HCT116 (cell line): ENCODE measurements at regions of chr14 and their contacts with region 1.

Region 1: GRCh38 chr14:23320774-23321571 is at the start of gene PABPN1:
- DNase-seq: peak; percentile 100
- ATAC-seq: peak; percentile 91
- H3K4me3 ChIP-seq: peak within 1 kb of the TSS; percentile 64 to 98
- H3K27ac ChIP-seq: peak within 1 kb of the TSS; percentile 83
- H3K4me1 ChIP-seq: peaks cover 12 to 23% of the 10 kb centered on the region in 2 experiments; a peak in 3 of 4 replicates
- H3K27me3 ChIP-seq: no peaks in the 10 kb centered on the region
- CTCF ChIP-seq: no peak
- POLR2A ChIP-seq: no peak
- RAD21 ChIP-seq: no peak
- total RNA-seq, gene PABPN1: 184 TPM

Region 2: DNA sequence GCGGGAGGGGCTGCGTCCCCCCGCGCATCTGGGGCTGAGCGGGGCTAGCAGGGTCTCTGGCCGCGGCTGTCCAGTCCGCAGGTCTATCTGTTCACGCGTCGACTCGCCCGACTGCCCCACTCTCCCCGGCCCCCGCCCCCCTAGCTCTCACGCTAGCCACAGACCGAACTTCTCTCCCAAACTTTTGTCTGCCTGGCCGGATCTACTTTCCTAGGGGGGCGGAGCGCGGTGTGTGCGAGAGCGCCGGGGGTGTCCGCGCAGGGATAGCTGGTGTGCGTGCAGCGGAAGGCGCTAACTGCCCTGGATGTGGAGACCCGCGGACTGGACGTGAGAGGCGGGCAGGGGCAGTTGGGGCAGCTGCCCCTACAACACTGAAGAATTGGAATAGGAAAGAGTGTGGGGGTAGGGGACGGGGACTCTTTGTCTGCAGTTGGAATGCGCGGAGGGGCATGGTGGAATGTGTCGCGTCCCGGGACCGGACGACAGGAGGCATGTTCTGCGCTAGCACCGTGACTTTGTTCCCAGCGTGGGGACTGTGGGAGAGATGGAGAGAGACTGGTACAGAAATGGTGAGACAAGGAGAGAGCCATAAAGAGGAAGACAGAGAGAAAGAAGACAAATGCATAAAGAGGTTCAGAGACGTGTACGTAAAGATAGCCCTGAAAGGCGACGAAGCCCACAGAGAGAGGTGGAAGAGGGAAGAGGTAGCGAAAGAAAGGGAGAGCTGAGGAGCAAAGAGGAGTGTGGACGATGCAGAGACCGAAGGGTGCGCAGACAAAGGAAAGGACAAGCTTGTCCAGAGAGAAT is 338.3 kb before region 1 on chr14 and contains the start of gene AJUBA:
- CTCF ChIA-PET with region 1: no interaction called
- POLR2A ChIA-PET with region 1: no interaction called
- RAD21 ChIA-PET with region 1: no interaction called
- intact Hi-C with region 1: no loop called
- DNase-seq: peak; percentile 78
- ATAC-seq: peak; percentile 57
- H3K4me3 ChIP-seq: peak within 1 kb of the TSS; percentile 77 to 83
- H3K27ac ChIP-seq: peak within 1 kb of the TSS; percentile 95
- H3K4me1 ChIP-seq: peaks cover 28 to 38% of the 10 kb centered on the region in 2 experiments
- H3K27me3 ChIP-seq: no peaks in the 10 kb centered on the region
- CTCF ChIP-seq: no peak
- POLR2A ChIP-seq: no peak
- RAD21 ChIP-seq: no peak
- total RNA-seq, gene AJUBA: 39.7 TPM

Region 3: GRCh38 chr14:23286020-23286905 is 34.7 kb before region 1 on chr14 and contains the start of gene HOMEZ:
- CTCF ChIA-PET with region 1: no interaction called
- POLR2A ChIA-PET with region 1: interaction called, 6 read pairs
- RAD21 ChIA-PET with region 1: no interaction called
- intact Hi-C with region 1: loop called (anchors 1 kb)
- DNase-seq: peak; percentile 92
- ATAC-seq: peak; percentile 98
- H3K4me3 ChIP-seq: peak within 1 kb of the TSS; percentile 74 to 96
- H3K27ac ChIP-seq: peak within 1 kb of the TSS; percentile 77
- H3K4me1 ChIP-seq: peaks cover 10 to 14% of the 10 kb centered on the region in 2 experiments
- H3K27me3 ChIP-seq: no peaks in the 10 kb centered on the region
- CTCF ChIP-seq: no peak
- POLR2A ChIP-seq: peak; percentile 61
- RAD21 ChIP-seq: no peak
- total RNA-seq, gene HOMEZ: 18.2 TPM

Region 4: GRCh38 chr14:23301288-23301968 is 19.5 kb before region 1 on chr14:
- CTCF ChIA-PET with region 1: interaction called, 15 read pairs
- POLR2A ChIA-PET with region 1: interaction called, 21 read pairs
- RAD21 ChIA-PET with region 1: interaction called in 1 of 2 experiments, 8 read pairs
- intact Hi-C with region 1: no loop called
- DNase-seq: peak; percentile 95
- ATAC-seq: peak; percentile 84
- H3K4me3 ChIP-seq: peak overlapping the region; percentile 54 to 64
- H3K27ac ChIP-seq: peak overlapping the region; percentile 96
- H3K4me1 ChIP-seq: peaks cover 18 to 41% of the 10 kb centered on the region in 2 experiments
- H3K27me3 ChIP-seq: no peaks in the 10 kb centered on the region
- CTCF ChIP-seq: peak in 2 of 3 experiments; percentile 69 to 70; a peak in 4 of 6 replicates
- POLR2A ChIP-seq: peak; percentile 33
- RAD21 ChIP-seq: no peak

Region 5: DNA sequence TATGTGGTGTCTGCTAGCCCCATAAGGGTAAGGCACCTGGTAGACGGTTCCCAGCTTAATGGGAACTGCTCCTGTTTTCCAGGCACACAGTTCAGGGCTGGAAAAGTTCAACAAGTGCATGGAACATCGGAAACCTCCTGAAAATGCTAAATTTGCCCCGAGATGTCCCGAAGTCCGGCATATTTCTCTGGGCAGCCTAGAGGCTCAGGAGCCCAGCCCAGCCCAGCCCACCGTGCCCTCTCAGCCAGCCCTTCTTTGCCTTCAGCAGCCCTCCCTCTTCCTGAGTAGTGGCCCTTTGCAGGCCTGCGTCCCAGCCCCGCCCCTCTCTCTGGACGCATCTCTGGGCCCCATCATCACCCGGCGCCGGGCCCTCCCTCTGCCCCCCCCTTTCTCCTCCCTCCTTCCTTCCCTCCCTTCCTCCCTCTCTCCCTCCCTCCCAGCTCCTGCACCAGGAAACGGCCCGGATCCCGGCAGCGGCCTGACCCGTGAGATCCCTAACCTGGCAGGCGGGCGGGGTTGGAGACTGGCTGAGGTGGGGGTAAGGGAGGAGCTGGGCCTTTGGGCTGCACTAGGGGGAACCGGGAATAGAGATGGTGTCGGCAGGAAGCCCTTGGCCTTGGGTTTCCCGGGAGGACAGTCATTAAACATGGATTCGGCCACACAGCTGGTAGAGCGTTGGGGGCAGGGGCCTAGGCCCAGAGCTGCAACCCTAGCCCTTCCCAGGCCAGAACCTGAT is 14.4 kb before region 1 on chr14 and contains the start of gene BCL2L2:
- CTCF ChIA-PET with region 1: interaction called, 15 read pairs
- POLR2A ChIA-PET with region 1: interaction called, 21 read pairs
- RAD21 ChIA-PET with region 1: interaction called in 1 of 2 experiments, 8 read pairs
- intact Hi-C with region 1: no loop called
- DNase-seq: peak; percentile 76
- ATAC-seq: peak; percentile 57
- H3K4me3 ChIP-seq: peak within 1 kb of the TSS; percentile 76 to 99
- H3K27ac ChIP-seq: peak within 1 kb of the TSS; percentile 79
- H3K4me1 ChIP-seq: peaks cover 19 to 40% of the 10 kb centered on the region in 2 experiments
- H3K27me3 ChIP-seq: no peaks in the 10 kb centered on the region
- CTCF ChIP-seq: no peak
- POLR2A ChIP-seq: peak; percentile 64
- RAD21 ChIP-seq: no peak
- total RNA-seq, gene BCL2L2: 25.5 TPM